BJ (cell line): ENCODE measurements at regions of chr1 and their contacts with region 1.

Region 1: DNA sequence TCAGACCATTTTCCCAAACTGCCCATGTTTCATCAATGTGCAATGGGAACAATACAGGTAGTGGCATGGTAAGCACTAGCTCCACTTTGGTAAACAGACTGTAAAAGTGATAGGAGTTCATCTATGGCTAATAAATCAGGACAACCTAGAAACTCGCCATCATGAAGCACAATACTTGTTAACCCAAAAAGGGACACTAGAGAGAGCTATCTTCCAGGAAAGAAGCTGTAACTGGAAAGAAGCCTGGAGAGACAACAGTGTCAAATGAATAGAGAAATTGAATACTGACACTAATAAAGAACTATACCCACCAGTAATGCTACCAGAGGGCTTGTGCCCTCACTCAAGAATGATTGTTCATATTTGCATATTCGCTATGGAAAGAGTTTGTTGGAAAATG is 164.7 kb upstream of the RGS18 start:
- DNase-seq: no peak
- H3K4me3 ChIP-seq: no peak overlapping the region
- H3K27me3 ChIP-seq: no peaks in the 10 kb centered on the region
- CTCF ChIP-seq: peak; percentile 40

Region 2: DNA sequence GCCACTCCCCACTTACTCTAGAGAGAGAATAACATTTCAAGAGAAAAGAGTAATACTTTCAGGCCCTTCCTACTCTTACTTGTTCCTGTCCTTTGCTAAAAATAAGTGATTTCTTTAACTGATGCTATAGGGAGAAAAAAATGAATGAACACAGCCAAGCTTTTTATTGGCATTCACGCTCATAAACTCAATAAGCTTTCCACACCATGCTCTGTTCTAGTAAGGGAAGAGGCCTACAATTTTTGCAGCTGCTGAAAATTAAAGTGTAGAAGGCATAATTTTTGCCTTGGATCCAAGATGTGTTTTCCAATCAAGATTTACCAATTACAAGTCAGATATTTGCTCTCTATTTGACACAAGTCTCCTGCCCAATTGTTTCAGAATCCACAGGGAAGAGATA is 23.4 kb before region 1 on chr1:
- CTCF ChIA-PET with region 1: no interaction called
- POLR2A ChIA-PET with region 1: no interaction called
- DNase-seq: no peak
- H3K4me3 ChIP-seq: no peak overlapping the region
- H3K27me3 ChIP-seq: no peaks in the 10 kb centered on the region
- CTCF ChIP-seq: no peak

Region 3: DNA sequence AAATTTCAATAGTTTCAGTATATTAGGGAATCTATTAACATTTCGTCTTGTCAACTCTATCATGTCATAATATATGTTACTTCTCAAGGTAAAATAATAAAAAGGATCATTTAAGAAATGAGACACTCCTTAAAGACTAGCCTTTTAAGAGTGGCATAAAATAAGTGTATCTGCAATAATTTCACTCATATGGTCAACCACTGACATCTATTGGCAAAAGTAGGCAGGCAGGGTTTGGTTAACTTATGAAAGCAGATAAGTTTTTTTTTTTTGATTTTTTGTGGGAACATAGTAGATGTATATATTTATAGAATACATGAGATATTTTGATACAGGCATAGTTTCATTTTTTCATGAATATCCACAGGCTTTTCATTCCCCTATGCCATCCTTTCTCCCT is 317.7 kb after region 1 on chr1:
- CTCF ChIA-PET with region 1: interaction called, 22 read pairs
- POLR2A ChIA-PET with region 1: no interaction called
- DNase-seq: no peak
- H3K4me3 ChIP-seq: no peak overlapping the region
- H3K27me3 ChIP-seq: no peaks in the 10 kb centered on the region
- CTCF ChIP-seq: peak; percentile 56